ENCODE measurements at regions of chr3 and their contacts with region 1.

Region 1: DNA sequence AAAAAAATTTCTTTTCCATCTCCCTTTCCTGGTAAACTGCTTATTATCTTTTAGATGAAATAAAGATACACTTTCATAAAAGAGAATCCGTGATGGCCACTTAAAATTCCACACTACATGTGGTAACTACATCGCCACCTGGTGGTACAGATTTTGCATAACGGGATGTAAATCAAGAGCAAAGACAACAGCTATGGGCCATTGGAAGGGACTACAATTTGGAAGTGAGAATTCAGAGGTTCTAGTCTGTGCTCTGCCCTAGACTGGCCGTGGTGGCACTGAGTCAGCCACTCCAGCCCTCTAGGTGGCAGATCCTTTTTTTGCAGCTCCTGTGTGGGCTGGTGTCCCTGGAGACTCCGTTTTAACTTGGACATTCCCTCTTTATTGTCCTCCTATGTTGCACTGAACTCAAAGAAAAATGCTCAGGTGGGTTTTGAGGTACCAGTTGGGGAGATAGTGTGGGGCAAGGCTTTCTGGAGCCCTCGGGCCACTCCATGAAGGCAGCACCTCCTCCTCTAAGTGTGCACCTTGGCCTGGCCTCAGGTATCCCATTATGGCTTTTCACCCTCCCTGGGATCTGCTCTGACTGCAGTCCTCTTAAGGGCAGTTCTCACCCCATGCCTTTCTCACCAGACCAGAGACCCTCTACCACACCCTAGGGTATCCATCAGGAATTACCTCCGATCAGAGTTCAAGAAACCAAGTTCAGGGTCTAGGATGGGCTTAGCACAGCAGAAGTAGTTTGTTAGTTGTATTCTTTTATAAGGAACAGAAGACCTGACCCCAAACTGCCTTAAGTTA is 54.9 kb downstream of the SPSB4 start:
- DNase-seq: peak in 6 of 10 donors; percentile 35 to 72 (median 52)

Region 2: GRCh38 chr3:140898340-140899180 is 207.5 kb before region 1 on chr3:
- intact Hi-C with region 1: loop called (anchors 10 kb)
- DNase-seq: no peak

Region 3: DNA sequence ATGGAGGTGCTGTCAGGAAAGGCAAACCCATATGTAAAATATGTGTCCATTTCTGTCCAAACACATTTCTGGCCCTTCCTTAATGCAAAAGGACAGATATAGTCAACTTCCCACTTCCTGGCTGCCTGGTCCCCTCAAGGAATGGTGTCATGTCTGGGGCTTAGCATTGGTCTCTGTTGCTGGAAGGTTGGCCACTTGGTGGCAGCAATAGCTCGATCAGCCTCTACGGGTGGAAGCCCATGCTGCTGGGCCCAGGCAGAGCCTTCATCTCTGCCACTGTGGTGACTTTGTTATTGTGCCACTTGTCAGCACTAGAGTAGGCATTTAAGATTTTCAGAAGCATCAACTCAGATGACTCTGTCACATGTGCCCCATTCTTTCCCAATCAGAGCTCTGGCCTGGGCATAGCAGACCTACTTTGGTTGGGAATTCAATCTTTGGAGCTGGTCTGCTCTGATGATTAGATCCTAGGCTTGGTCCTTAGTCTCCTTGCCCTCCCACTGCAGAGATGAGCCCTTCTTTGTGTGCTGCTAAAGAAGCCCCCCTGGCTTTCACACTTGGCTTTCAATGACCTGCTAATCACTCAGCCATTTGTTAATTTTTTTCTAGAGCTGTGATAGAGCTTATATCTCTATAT is 105.9 kb before region 1 on chr3:
- intact Hi-C with region 1: loop called (anchors 1 kb)
- DNase-seq: peak; percentile 47 to 96 (median 75)

Region 4: GRCh38 chr3:141164852-141165251 is 58.8 kb after region 1 on chr3:
- intact Hi-C with region 1: no loop called
- DNase-seq: no peak